Activated T-helper 1 cell treated with anti-CD3 and anti-CD28 coated beads, Interleukin-12 subunit alpha, Interleukin-12 subunit beta, Interleukin-2, Interleukin-4 antibody, amounts not matched to agents 30 ng/mL and 10 ng/mL and 1 ng/mL, durations not matched to agents 14 hours and 24 hours and 36 hours (primary cell): ENCODE measurements at regions of chr3 and their contacts with region 1.

Region 1: DNA sequence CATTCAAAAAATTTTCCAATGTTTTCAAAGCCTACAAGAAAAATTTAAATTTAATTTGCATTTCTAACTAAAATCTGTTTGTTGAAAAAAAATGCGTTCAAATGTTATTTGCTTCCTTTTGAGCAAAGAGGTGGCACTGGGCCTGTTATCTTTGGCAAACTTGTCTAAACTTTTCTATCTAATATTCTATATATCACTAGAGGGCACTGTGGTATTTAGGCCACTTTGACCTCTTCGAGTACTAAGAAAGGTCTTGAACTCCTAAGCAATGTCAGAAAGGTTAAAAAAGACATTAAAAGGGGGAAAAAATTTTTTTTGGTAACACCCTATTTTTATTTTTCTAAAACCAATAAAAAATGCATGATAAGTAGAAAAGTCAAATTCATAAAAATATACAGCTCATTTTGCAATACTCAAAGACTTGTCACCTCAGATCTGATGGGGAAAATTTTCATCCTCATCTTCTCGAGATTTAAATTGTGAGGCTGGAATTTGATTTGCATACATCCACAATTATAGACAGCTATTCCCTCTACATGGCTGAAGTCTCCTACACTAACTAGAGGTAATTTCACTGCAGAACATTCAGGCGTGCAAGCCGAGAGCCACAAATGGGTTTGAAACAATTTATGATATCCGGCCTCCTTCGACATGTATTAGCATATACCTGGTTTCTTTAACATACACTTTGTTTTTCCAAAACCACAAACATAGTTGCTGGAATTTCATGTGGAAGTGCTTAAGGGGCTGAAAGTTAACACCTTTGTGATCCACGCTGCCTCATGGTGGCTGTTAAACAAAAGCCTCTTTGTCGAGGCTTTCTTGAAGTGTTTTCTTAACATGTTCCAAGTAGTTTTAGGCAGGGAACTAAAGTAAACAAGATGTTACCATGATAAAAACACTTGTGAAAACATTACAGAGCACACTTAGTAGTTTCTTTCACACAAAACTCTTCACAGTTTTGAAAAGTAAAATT is 576.4 kb downstream of the FOXP1 start:
- DNase-seq: no peak
- H3K4me3 Mint-ChIP-seq: no peak overlapping the region
- H3K27ac Mint-ChIP-seq: no peak overlapping the region
- H3K4me1 Mint-ChIP-seq: peaks cover 59% of the 10 kb centered on the region
- H3K27me3 Mint-ChIP-seq: no peaks in the 10 kb centered on the region

Region 2: GRCh38 chr3:70856414-70857162 is 150.5 kb before region 1 on chr3:
- intact Hi-C with region 1: loop called (anchors 1 kb)
- DNase-seq: no peak
- H3K4me3 Mint-ChIP-seq: no peak overlapping the region
- H3K27ac Mint-ChIP-seq: peak overlapping the region; percentile 49
- H3K4me1 Mint-ChIP-seq: peaks cover 22% of the 10 kb centered on the region
- H3K27me3 Mint-ChIP-seq: peaks cover 6% of the 10 kb centered on the region

Region 3: DNA sequence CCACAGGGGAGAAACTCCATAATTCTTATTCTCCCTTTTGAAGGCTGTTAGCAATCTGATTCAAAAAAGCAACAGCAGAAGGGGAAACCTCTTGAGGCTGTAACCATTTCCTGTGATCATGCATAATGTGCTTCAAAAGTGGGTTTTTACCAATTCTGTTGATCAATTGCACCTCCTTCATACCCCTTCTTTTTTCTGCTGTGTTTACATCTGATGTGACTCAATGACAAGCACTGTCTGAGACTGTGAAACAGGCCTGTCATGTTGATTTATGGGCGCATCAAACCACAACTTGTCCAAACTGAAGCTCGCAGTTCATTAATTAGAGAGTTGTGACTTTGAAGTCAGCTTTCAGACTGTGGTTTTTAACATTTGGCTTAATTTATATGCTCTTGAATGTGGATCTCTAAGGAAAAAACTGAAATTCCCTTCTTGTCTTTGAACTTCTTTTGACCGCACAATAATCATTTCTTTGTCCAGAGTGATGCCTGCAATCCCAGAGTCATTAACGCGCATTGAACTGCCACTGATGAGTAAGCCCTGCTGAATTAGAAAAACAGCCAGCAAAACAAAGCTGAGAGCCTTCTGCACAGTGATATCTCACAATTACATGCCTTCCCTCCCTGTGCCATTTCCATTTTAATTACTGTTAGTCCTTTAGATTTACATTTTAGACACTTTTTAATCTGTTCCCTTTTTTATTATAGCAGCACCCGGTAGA is 43.6 kb after region 1 on chr3:
- intact Hi-C with region 1: loop called (anchors 1 kb)
- DNase-seq: no peak
- H3K4me3 Mint-ChIP-seq: no peak overlapping the region
- H3K27ac Mint-ChIP-seq: peak overlapping the region; percentile 60
- H3K4me1 Mint-ChIP-seq: peaks cover 70% of the 10 kb centered on the region
- H3K27me3 Mint-ChIP-seq: peaks cover 5% of the 10 kb centered on the region

Region 4: GRCh38 chr3:71087143-71088018 is 80.3 kb after region 1 on chr3:
- intact Hi-C with region 1: loop called (anchors 1 kb)
- DNase-seq: peak; percentile 44
- H3K4me3 Mint-ChIP-seq: peak overlapping the region; percentile 46
- H3K27ac Mint-ChIP-seq: peak overlapping the region; percentile 89
- H3K4me1 Mint-ChIP-seq: peaks cover 77% of the 10 kb centered on the region
- H3K27me3 Mint-ChIP-seq: peaks cover 2% of the 10 kb centered on the region

Region 5: DNA sequence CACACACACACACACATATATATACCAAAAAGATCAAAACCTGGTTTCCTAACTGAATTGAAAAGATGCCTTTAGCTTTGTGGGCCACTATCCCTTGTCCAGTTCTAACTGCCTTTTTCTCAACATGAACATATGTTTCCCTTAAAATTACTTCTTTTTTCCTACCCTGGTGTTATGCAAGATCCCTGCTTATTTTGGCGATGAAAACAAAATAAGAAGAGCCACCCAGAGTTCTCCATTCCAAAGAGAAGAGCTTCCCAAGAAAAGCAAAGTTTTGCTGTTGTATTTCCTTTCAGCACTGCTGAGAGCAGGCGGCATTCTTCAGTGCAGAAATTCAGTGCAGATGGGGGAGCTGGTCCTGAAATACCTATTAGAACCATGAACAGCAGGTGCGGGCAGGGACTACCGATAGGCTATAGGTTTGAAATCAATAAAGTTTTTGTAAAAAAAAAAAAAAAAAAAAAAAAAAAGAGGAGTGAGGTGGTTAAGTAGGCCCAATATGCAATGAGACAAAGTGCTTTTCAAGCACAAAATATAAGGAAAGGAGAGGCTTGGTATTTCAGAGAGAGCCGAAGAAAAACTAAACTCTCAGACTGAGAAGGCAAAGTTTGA is 338.4 kb after region 1 on chr3:
- intact Hi-C with region 1: no loop called
- DNase-seq: no peak
- H3K4me3 Mint-ChIP-seq: no peak overlapping the region
- H3K27ac Mint-ChIP-seq: no peak overlapping the region
- H3K4me1 Mint-ChIP-seq: no peaks in the 10 kb centered on the region
- H3K27me3 Mint-ChIP-seq: peaks cover 23% of the 10 kb centered on the region

Region 6: DNA sequence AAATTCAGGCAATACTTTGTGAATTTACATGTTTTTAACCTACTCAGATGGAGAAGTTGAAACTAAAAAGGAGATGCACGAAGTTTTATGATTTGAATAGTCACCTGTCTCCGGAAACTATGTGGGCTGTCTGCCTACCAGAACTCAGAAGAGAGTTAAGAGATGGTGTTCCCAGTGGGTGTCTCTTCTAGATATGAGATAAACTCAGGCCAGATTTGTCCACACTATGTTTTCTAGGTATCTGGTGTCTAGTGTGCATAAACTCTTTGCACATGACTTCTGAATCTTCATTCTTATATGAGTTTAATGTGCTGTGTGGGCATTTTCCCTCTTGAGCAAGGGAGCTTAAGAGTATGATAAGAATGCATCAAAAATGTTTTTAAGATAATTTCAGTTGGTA is 353.7 kb after region 1 on chr3:
- intact Hi-C with region 1: loop called (anchors 1 kb)
- DNase-seq: no peak
- H3K4me3 Mint-ChIP-seq: no peak overlapping the region
- H3K27ac Mint-ChIP-seq: peak overlapping the region; percentile 80
- H3K4me1 Mint-ChIP-seq: peaks cover 19% of the 10 kb centered on the region
- H3K27me3 Mint-ChIP-seq: peaks cover 25% of the 10 kb centered on the region

Region 7: DNA sequence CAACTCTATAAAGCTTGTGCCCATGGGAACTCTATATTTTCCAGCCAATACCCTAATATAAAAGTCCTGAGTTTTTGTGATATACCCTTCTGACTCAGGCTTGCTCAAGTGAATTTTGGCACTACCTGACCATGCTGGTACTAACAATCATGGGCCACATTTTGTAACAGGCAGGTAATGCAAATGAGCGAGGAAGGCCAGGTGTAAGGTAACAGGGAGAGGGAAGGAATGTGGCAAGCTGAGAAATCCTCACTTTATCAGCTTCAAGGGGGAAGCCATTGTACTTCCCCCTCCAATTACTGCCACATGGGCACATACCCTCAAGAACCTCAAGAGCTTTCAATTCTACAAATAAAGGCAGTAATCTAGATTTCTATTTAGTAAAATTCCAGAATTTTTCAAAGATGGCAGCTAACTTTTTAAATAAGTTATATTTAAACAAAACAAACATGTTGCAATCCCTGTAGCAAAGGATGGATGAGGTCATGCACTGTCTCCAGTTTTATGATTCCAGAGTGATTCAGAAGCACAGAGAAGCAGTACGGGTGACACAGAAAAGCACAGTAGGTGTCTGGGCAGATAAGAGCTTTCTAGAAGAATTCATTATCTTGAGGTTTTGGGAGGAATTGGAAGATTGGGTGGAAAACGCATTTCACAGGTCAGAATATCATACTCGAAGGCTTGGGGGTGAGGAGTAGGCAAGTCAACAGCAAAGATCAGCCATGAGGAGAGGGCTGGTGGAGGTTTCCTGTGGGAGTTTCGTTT is 488.8 kb after region 1 on chr3:
- intact Hi-C with region 1: loop called (anchors 5 kb)
- DNase-seq: peak; percentile 4
- H3K4me3 Mint-ChIP-seq: peak overlapping the region; percentile 22
- H3K27ac Mint-ChIP-seq: peak overlapping the region; percentile 40
- H3K4me1 Mint-ChIP-seq: peaks cover 57% of the 10 kb centered on the region
- H3K27me3 Mint-ChIP-seq: peaks cover 6% of the 10 kb centered on the region